ENCODE measurements at regions of chr5 and their contacts with region 1.

Region 1: GRCh38 chr5:112958093-112959088 is 18.2 kb upstream of the DCP2 start:
- DNase-seq: peak; percentile 61
- H3K4me3 Mint-ChIP-seq: no peak overlapping the region
- H3K27ac Mint-ChIP-seq: no peak overlapping the region
- H3K4me1 Mint-ChIP-seq: peaks cover 29% of the 10 kb centered on the region
- H3K27me3 Mint-ChIP-seq: peaks cover 5% of the 10 kb centered on the region

Region 2: GRCh38 chr5:112691758-112692157 is 266.6 kb before region 1 on chr5:
- CTCF ChIA-PET with region 1: no interaction called
- POLR2A ChIA-PET with region 1: no interaction called
- intact Hi-C with region 1: loop called (anchors 5 kb)
- DNase-seq: peak; percentile 27
- H3K4me3 Mint-ChIP-seq: no peak overlapping the region
- H3K27ac Mint-ChIP-seq: no peak overlapping the region
- H3K4me1 Mint-ChIP-seq: no peaks in the 10 kb centered on the region
- H3K27me3 Mint-ChIP-seq: peaks cover 22% of the 10 kb centered on the region

Region 3: DNA sequence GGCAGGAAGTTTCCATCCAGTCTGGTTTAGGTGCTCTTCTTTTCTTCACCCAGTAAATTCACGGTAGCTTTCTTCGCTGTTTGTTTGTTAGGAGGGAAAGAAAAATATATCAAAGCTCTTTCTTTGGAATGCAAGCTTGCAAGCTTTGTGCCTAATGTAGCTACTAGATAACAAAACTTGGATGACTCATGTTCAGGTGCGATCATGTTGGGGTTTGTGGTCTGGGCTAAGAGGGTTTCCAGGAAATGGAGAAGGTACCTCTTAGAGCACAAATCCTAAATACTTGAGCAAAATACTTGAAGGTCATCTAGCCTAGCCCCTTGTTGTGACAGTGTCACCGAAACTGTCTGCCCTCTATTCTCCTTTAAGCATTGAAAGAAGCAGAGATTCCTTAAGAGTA is 79.6 kb before region 1 on chr5:
- CTCF ChIA-PET with region 1: no interaction called
- POLR2A ChIA-PET with region 1: no interaction called
- intact Hi-C with region 1: loop called (anchors 1 kb)
- DNase-seq: peak; percentile 79
- H3K4me3 Mint-ChIP-seq: peak overlapping the region; percentile 5
- H3K27ac Mint-ChIP-seq: peak overlapping the region; percentile 84
- H3K4me1 Mint-ChIP-seq: peaks cover 35% of the 10 kb centered on the region
- H3K27me3 Mint-ChIP-seq: no peaks in the 10 kb centered on the region

Region 4: GRCh38 chr5:112935675-112936074 is 22.7 kb before region 1 on chr5:
- CTCF ChIA-PET with region 1: no interaction called
- POLR2A ChIA-PET with region 1: no interaction called
- intact Hi-C with region 1: loop called (anchors 1 kb)
- DNase-seq: no peak
- H3K4me3 Mint-ChIP-seq: no peak overlapping the region
- H3K27ac Mint-ChIP-seq: no peak overlapping the region
- H3K4me1 Mint-ChIP-seq: peaks cover 16% of the 10 kb centered on the region
- H3K27me3 Mint-ChIP-seq: no peaks in the 10 kb centered on the region